ENCODE measurements at regions of chr13 and their contacts with region 1.

Region 1: DNA sequence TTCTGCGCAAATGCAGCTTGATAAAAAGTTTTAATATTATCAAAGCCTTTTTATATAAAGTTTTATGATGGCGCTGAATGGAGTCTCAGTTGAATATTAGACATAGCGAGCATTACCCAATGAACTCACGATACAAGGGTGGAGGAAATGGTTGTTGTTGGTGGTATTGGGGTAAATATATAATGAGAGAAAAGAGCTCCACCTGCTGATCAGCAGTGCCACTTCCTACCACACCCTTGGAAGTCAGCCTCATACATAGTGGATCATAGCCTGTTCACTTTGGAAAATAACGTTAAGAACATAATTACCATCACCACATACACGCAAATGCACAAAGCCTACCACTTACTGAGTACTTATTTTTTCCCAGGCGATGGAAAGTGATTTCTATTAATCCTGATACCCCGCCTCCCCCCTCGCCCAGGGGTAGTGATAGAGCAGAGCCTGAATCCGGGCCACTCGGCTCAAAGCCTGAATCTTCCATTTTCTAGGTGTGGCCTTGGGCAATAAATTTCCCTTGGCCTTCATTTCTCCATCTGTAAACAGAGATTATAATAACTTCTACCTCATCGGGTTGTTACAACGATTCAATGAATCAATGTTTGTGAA is 358.3 kb downstream of the KLF5 start:
- DNase-seq: no peak
- H3K4me3 ChIP-seq: no peak overlapping the region
- H3K27ac ChIP-seq: no peak overlapping the region
- H3K4me1 ChIP-seq: peaks cover 38% of the 10 kb centered on the region
- H3K27me3 ChIP-seq: no peaks in the 10 kb centered on the region
- CTCF ChIP-seq: peak; percentile 38 to 42

Region 2: GRCh38 chr13:72890546-72890945 is 526.6 kb before region 1 on chr13:
- CTCF ChIA-PET with region 1: no interaction called
- dilution Hi-C with region 1: no loop called
- in situ Hi-C with region 1: no loop called
- intact Hi-C with region 1: no loop called
- DNase-seq: peak; percentile 67
- H3K4me3 ChIP-seq: no peak overlapping the region
- H3K27ac ChIP-seq: no peak overlapping the region
- H3K4me1 ChIP-seq: no peaks in the 10 kb centered on the region
- H3K27me3 ChIP-seq: no peaks in the 10 kb centered on the region
- CTCF ChIP-seq: no peak

Region 3: DNA sequence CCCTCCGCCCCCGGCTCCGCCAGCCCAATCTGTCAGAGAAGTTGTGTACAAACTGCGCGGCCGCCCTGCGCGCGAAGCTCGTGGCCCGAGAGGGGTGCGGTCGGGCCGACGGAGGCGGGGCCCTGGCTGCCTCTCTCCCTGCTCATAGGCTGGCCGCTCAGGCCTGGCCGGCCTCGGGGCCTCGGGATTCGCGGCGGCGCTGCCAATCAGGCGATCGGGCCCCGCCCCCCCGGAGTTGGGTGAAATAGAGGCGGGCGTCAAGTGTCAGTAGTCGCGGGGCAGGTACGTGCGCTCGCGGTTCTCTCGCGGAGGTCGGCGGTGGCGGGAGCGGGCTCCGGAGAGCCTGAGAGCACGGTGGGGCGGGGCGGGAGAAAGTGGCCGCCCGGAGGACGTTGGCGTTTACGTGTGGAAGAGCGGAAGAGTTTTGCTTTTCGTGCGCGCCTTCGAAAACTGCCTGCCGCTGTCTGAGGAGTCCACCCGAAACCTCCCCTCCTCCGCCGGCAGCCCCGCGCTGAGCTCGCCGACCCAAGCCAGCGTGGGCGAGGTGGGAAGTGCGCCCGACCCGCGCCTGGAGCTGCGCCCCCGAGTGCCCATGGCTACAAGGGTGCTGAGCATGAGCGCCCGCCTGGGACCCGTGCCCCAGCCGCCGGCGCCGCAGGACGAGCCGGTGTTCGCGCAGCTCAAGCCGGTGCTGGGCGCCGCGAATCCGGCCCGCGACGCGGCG is 358.2 kb before region 1 on chr13 and contains the start of gene KLF5:
- CTCF ChIA-PET with region 1: no interaction called
- dilution Hi-C with region 1: no loop called
- in situ Hi-C with region 1: loop called (anchors 10 kb)
- intact Hi-C with region 1: no loop called
- DNase-seq: peak; percentile 99
- H3K4me3 ChIP-seq: peak within 1 kb of the TSS; percentile 61 to 99 (median 86)
- H3K27ac ChIP-seq: peak within 1 kb of the TSS; percentile 99
- H3K4me1 ChIP-seq: peaks cover 43% of the 10 kb centered on the region
- H3K27me3 ChIP-seq: no peaks in the 10 kb centered on the region
- CTCF ChIP-seq: no peak
- total RNA-seq, gene KLF5: 34.3 to 175 TPM

Region 4: GRCh38 chr13:73168953-73169401 is 248.1 kb before region 1 on chr13:
- CTCF ChIA-PET with region 1: no interaction called
- dilution Hi-C with region 1: no loop called
- in situ Hi-C with region 1: no loop called
- intact Hi-C with region 1: loop called (anchors 1 kb)
- DNase-seq: peak; percentile 94
- H3K4me3 ChIP-seq: no peak overlapping the region
- H3K27ac ChIP-seq: peak overlapping the region; percentile 98
- H3K4me1 ChIP-seq: peaks cover 50% of the 10 kb centered on the region
- H3K27me3 ChIP-seq: no peaks in the 10 kb centered on the region
- CTCF ChIP-seq: no peak

Region 5: GRCh38 chr13:73368608-73369007 is 48.5 kb before region 1 on chr13:
- CTCF ChIA-PET with region 1: no interaction called
- dilution Hi-C with region 1: no loop called
- in situ Hi-C with region 1: no loop called
- intact Hi-C with region 1: loop called (anchors 1 kb)
- DNase-seq: peak; percentile 87
- H3K4me3 ChIP-seq: no peak overlapping the region
- H3K27ac ChIP-seq: peak overlapping the region; percentile 78
- H3K4me1 ChIP-seq: peaks cover 31% of the 10 kb centered on the region
- H3K27me3 ChIP-seq: no peaks in the 10 kb centered on the region
- CTCF ChIP-seq: no peak

Region 6: GRCh38 chr13:73492811-73493210 is 75.7 kb after region 1 on chr13:
- CTCF ChIA-PET with region 1: no interaction called
- dilution Hi-C with region 1: no loop called
- in situ Hi-C with region 1: no loop called
- intact Hi-C with region 1: loop called (anchors 2 kb)
- DNase-seq: peak; percentile 11
- H3K4me3 ChIP-seq: no peak overlapping the region
- H3K27ac ChIP-seq: no peak overlapping the region
- H3K4me1 ChIP-seq: peaks cover 14% of the 10 kb centered on the region
- H3K27me3 ChIP-seq: no peaks in the 10 kb centered on the region
- CTCF ChIP-seq: no peak

Region 7: GRCh38 chr13:73598021-73598712 is 181.0 kb after region 1 on chr13:
- CTCF ChIA-PET with region 1: no interaction called
- dilution Hi-C with region 1: no loop called
- in situ Hi-C with region 1: no loop called
- intact Hi-C with region 1: loop called (anchors 1 kb)
- DNase-seq: peak; percentile 91
- H3K4me3 ChIP-seq: no peak overlapping the region
- H3K27ac ChIP-seq: peak overlapping the region; percentile 69
- H3K4me1 ChIP-seq: peaks cover 16% of the 10 kb centered on the region
- H3K27me3 ChIP-seq: no peaks in the 10 kb centered on the region
- CTCF ChIP-seq: no peak

Region 8: GRCh38 chr13:73708393-73708985 is 291.4 kb after region 1 on chr13:
- CTCF ChIA-PET with region 1: no interaction called
- dilution Hi-C with region 1: no loop called
- in situ Hi-C with region 1: loop called (anchors 10 to 25 kb)
- intact Hi-C with region 1: loop called (anchors 1 kb)
- DNase-seq: peak; percentile 63
- H3K4me3 ChIP-seq: no peak overlapping the region
- H3K27ac ChIP-seq: peak overlapping the region; percentile 42
- H3K4me1 ChIP-seq: no peaks in the 10 kb centered on the region
- H3K27me3 ChIP-seq: no peaks in the 10 kb centered on the region
- CTCF ChIP-seq: peak; percentile 87 to 93